Posterior vena cava (tissue), 2 donors: ENCODE measurements at regions of chr13 and their contacts with region 1.

Region 1: DNA sequence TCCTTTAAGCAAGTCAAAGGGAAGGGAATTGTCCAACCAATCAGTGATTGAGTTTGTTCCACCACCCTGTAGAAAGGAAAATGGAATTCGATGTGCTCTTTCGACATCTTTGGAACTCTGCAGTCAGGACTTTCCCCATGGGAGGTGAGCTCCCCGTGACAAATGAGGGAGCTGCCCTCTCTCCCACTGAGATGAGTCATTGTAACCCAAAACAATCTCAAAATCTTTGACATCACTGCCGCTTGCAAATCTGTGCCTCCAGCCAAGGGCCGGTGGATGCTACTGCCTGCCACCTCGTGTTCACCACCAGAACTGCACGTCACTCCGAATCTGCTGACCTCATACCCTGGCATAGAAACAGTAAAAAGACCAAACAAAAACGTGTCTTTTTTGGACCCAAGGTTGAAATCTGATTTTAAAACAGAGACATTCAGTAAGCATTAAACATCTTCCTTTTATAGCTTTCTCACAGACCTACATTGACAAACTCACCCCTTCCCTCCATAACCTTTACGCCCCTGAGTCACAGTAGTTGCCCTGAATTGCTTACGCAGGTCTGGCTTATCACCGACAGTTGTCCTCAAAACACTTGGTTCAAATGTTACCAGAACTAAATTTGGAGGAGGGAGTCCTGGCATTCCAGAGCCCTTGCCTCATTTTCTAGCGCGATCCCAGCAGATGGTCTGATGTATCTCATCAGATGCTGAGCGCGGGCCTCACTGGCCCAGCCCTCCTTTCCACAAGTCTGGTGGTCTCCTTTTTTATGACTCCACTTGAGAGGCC is 105.2 kb downstream of the COL4A2 start:
- DNase-seq: peak; percentile 96

Region 2: GRCh38 chr13:109275852-109276251 is 1136.5 kb before region 1 on chr13:
- intact Hi-C with region 1: no loop called
- DNase-seq: no peak

Region 3: GRCh38 chr13:109918179-109918711 is 494.1 kb before region 1 on chr13:
- intact Hi-C with region 1: no loop called
- DNase-seq: no peak

Region 4: DNA sequence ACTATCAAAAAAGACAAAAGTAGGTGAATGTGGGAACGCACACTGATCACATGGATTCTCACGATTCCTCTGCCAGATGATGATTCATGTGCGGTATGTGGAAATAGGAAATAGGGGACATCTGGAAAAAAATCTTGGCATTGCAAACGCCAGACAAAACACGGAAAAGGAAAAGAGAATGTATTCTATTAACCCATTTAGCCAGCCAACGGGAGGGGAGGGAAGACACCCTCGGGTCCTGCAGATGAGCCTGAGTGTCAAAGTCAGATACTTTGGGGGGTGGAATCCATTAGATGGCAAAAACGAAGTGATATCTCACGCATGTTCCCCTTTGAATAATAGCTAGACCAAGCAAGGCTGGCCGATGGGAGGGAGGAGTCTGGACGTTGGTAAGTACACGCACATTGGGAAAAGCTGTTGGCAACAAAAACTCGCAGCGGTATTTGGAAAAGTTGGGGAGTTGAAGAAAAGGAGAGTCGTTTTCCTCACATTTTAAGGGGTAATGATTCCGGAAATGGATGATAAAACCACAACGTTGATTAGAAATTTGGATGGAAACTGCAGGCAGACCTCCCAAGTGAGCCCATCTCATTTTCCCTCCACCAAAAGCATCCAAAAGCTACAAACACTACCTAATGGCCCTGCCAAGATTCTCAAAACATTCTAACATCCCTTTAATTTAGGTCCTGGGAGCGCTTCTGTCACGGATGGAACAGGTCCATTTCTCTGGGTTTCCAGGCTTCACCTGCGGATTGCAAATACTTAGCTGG is 179.0 kb before region 1 on chr13:
- intact Hi-C with region 1: loop called in 1 of 2 experiments (anchors 5 kb)
- DNase-seq: peak; percentile 91

Region 5: GRCh38 chr13:110245416-110245899 is 166.9 kb before region 1 on chr13:
- intact Hi-C with region 1: loop called in 1 of 2 experiments (anchors 5 kb)
- DNase-seq: peak; percentile 75

Region 6: DNA sequence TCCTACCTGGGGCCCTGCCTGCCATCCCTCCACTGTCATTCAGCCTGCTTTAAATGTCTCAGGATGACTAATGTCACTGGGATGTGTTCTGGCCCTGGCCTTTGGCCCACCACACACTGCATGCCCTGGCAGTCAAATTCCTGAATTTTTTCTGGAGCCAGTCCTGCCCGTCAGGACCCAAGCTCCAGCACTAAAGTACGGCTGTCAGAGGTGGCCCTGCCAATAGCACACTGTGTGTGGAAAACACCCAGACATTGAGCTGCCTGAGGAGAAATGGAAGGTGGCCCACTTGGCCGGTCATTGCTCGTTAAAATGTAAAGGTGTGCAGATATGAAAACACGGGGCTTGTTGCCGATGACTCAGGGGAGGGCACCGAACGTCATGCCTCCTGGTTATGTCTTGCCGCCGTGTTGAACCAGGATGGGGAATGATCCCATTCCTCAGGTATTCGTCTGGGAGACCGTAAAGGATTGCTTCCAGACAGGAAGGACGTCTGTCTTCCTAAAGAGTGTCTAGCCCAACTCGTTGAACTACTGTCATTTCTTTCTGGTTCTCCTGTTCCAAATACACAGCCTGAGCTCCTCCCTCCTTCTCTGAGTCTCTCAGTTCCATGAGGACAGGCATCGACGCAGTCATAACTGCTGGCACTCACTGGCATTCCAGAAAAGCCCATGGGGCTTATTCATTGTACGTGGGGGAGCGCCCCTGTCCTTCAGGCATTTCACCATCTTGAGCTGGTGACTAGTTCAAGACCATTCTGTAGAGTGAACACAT is 64.6 kb before region 1 on chr13:
- intact Hi-C with region 1: loop called in 1 of 2 experiments (anchors 5 kb)
- DNase-seq: peak; percentile 88